Activated CD4-positive, alpha-beta T cell treated with anti-CD3 and anti-CD28 coated beads, Interleukin-2, amount 10 ng/mL, durations not matched to agents 24 days and 14 days (primary cell): ENCODE measurements at regions of chr9 and their contacts with region 1.

Region 1: DNA sequence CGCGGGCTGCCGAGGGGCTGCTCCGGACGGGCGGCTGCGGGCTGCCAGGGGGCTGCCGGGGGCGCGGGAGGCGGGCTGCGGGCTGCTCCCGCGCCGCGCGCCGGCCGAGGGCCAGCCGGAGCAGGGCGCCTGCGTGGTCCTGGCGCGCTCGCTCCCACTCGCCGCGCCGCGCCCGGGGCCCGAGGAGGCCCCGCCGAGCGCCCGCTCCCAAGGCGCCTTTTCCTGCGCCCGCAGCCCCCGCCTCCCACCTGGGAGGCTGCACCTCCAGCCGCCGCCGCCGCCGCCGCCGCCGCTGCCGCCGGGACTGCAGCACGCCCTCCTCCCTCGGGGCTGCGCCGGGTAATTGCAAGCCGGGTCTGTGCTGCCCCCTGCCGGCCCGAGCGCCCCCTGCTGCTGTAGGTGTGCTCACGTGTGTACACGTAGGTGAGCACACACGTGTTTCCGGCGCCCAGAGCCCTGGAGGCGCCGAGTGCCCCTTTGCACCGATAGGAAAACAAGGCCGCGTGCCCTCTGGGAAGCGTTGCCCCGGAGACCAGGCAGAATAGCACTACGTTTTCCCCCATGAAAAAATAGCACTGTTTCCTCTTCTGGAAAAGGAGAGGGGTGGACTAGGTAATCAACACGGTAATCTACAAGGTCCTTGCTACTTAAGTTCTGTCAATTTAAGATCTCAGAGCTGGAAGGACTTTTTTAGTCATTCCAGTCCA is at the start of gene EPB41L4B:
- DNase-seq: peak; percentile 97
- H3K4me3 Mint-ChIP-seq: peak within 1 kb of the TSS; percentile 81
- H3K27ac Mint-ChIP-seq: peak within 1 kb of the TSS; percentile 66
- H3K4me1 Mint-ChIP-seq: peaks cover 10% of the 10 kb centered on the region
- H3K27me3 Mint-ChIP-seq: peaks cover 68% of the 10 kb centered on the region
- total RNA-seq, gene EPB41L4B: 1.2 and 1.5 TPM in 2 replicates

Region 2: GRCh38 chr9:108933718-108934322 is 387.1 kb before region 1 on chr9 and contains the start of gene ELP1:
- intact Hi-C with region 1: loop called (anchors 10 kb)
- DNase-seq: peak; percentile 98
- H3K4me3 Mint-ChIP-seq: peak within 1 kb of the TSS; percentile 97
- H3K27ac Mint-ChIP-seq: peak within 1 kb of the TSS; percentile 99
- H3K4me1 Mint-ChIP-seq: peaks cover 26% of the 10 kb centered on the region
- H3K27me3 Mint-ChIP-seq: no peaks in the 10 kb centered on the region
- total RNA-seq, gene ELP1: 35.2 and 36.2 TPM in 2 replicates

Region 3: DNA sequence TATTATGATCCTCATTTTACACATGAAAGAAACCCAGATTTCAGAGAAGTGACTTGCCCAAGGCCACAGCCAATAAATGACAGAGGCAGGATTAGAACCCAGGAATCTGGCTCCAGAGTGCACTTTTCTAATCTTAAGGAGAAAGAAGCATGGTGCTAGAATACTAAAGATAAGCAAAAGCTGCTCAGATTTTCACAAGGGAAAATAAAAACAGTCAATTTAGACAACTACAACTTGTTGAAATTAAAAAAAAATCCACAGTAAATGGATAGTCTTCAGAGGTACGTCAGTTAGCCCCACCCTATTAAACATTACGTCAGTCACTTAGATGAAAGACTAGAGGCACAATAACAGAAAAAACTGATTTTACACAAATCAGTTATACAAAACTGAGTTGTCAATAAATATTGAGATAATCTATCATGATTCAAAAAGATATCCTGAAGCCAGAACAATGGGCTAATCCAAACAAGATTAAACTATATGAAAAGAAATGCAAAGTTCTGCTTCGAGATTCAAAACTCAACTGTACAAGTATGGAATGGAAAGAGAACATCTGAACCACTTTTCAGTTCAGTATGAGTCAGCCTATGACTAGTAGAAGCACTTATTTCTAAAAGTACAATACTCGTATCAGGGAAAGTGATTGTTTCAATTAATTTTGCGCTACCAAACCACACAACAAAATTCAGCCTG is 210.4 kb before region 1 on chr9:
- intact Hi-C with region 1: loop called (anchors 5 kb)
- DNase-seq: no peak
- H3K4me3 Mint-ChIP-seq: peak overlapping the region; percentile 66
- H3K27ac Mint-ChIP-seq: peak overlapping the region; percentile 87
- H3K4me1 Mint-ChIP-seq: peaks cover 54% of the 10 kb centered on the region
- H3K27me3 Mint-ChIP-seq: no peaks in the 10 kb centered on the region

Region 4: GRCh38 chr9:109166771-109167601 is 153.9 kb before region 1 on chr9 and contains the start of gene FRRS1L:
- intact Hi-C with region 1: no loop called
- DNase-seq: no peak
- H3K4me3 Mint-ChIP-seq: peak within 1 kb of the TSS; percentile 48
- H3K27ac Mint-ChIP-seq: no peak within 1 kb of the TSS
- H3K4me1 Mint-ChIP-seq: peaks cover 2% of the 10 kb centered on the region
- H3K27me3 Mint-ChIP-seq: peaks cover 58% of the 10 kb centered on the region
- total RNA-seq, gene FRRS1L: not detected in 2 replicates

Region 5: GRCh38 chr9:109182940-109183798 is 137.7 kb before region 1 on chr9:
- intact Hi-C with region 1: loop called (anchors 5 kb)
- DNase-seq: peak; percentile 68
- H3K4me3 Mint-ChIP-seq: no peak overlapping the region
- H3K27ac Mint-ChIP-seq: no peak overlapping the region
- H3K4me1 Mint-ChIP-seq: peaks cover 13% of the 10 kb centered on the region
- H3K27me3 Mint-ChIP-seq: peaks cover 28% of the 10 kb centered on the region

Region 6: DNA sequence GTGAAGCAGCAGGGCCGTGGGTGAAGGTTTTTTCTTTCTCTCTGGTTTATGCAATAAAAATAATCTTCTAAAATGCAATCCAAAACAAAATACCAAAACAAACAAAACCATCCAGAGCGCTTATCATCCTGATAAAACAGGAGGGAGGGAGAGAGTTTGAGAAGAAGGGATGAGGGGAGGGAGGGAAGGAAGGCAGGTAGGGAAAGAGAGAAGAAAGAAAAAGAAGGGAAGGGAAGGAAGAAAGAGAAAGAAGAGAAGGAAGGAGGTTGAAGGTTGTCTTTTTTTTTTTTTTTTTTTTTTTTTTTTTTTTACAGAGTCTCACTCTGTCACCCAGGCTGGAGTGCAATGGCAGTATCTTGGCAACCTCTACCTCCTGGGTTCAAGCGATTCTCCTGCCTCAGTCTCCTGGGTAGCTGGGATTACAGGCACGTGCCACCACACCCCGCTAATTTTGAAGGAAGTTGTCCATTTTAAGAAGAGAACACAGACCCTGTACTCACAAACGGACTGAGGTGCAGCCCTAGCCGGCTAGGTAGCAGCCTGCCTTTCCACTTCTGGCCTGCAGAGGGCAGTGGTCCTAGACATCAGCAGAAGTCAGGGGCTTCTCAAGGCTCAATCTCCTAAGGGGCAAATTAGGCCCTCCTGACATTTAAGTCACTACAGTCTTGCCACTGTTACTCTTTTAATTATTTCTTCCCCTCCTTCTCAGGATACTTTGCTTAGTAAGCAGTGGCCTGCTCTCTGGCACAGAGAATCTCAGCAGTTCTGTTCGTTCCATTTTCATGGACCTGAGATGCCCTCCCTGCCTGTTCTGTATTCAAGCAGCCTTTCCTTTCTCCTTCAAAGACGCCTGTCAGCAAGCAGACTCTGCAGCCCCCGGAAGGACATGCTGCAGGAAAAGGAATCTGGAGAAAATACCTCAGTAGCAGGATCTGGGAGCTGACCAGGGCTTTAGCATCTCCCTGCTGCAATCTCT is 76.5 kb before region 1 on chr9:
- intact Hi-C with region 1: loop called (anchors 1 kb)
- DNase-seq: peak; percentile 91
- H3K4me3 Mint-ChIP-seq: no peak overlapping the region
- H3K27ac Mint-ChIP-seq: no peak overlapping the region
- H3K4me1 Mint-ChIP-seq: peaks cover 4% of the 10 kb centered on the region
- H3K27me3 Mint-ChIP-seq: peaks cover 35% of the 10 kb centered on the region

Region 7: DNA sequence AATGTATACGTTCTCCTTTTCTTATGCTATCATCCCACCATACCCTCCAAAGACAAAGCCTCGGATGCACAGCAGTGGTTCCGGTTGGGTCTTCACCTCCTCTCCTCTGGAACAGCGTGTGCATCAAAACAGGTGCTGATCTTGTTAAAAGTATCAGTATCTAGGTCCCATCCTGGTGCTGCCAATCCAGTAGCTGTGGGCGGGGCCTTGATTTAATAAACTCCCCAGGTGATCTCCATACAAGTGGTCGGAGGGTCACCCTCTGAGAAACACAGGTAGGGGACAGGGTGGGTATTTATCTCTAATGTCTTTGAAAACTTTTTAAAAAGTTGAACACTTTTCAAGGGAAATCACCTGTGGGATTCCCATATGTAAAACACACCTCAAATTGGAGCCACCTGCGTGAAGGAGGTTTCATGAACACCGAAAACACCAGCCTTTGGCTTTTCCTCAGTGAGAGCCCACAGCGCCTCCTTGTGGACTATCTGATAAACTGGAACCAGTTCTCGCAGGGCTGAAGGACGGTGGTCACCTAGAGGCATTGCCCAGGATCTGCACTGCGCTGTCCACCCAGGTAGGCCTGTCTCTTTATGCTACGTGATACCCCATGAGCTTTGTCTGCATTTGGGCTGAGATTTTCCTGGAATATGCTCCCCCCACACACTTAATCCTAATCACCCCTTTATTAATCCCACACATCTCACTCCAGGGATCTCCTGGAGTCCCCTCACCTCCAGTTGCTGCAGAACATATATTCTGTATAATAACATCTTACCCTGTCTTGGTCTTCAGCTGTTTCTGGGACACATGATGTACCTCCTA is 80.5 kb after region 1 on chr9:
- intact Hi-C with region 1: loop called (anchors 5 kb)
- DNase-seq: peak; percentile 83
- H3K4me3 Mint-ChIP-seq: peak overlapping the region; percentile 9
- H3K27ac Mint-ChIP-seq: peak overlapping the region; percentile 82
- H3K4me1 Mint-ChIP-seq: peaks cover 15% of the 10 kb centered on the region
- H3K27me3 Mint-ChIP-seq: peaks cover 12% of the 10 kb centered on the region